ENCODE measurements at regions of chr1 and their contacts with region 1.

Region 1: DNA sequence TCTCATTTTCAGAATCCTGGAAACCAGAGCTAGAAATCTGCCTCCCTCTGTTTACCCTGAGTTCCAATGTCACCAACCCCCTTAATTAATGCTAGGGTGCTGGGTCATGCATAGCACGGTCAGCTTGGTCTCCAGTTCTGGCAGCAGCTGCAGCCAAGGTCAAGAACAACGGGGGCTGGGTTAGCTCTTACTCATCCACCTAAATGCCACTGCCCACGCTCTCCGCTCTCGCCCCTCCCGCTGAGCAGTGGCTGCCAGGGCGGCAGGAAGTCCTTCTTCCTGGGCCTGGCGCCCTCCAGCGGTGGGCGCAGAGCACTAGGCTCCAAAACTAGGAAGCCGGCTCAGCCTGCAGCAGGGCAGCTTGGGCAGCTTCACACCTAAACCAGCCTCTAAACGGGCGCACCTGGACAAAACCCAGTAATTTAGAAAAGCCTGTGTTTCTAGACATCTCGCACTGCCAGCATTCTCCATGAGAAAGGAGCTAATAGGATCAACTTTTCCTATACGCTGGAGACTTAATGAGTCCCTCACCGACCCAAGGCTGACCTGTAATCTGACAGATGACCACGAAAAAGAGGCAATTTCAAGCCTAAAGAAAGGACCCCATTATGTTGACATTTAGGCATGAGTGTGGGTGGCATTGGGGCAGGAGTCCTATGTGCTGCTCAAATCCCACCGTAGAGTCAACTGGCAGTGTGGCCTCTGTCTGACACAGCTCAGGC is 78.3 kb upstream of the LRRN2 start:
- DNase-seq: peak; percentile 79 to 89 (median 87)
- ATAC-seq: peak; percentile 99
- H3K4me3 ChIP-seq: no peak overlapping the region
- H3K27ac ChIP-seq: no peak overlapping the region
- H3K4me1 ChIP-seq: peaks cover 5 to 6% of the 10 kb centered on the region in 2 experiments; a peak in 4 of 5 replicates
- H3K27me3 ChIP-seq: peaks cover 8 to 14% of the 10 kb centered on the region in 2 experiments; a peak in 4 of 5 replicates
- CTCF ChIP-seq: peak; percentile 93 to 97 (median 95)
- EP300 ChIP-seq: peak; percentile 45; the same call in 1 of the 2 replicates
- POLR2A ChIP-seq: no peak
- RAD21 ChIP-seq: peak; percentile 91

Region 2: GRCh38 chr1:204390751-204391466 is 373.0 kb before region 1 on chr1:
- CTCF ChIA-PET with region 1: no interaction called
- POLR2A ChIA-PET with region 1: no interaction called
- in situ Hi-C with region 1: no loop called
- intact Hi-C with region 1: no loop called
- DNase-seq: no peak
- ATAC-seq: no peak
- H3K4me3 ChIP-seq: no peak overlapping the region
- H3K27ac ChIP-seq: no peak overlapping the region
- H3K4me1 ChIP-seq: no peaks in the 10 kb centered on the region
- H3K27me3 ChIP-seq: peaks cover 25 to 27% of the 10 kb centered on the region in 2 experiments
- CTCF ChIP-seq: no peak
- EP300 ChIP-seq: no peak
- POLR2A ChIP-seq: no peak
- RAD21 ChIP-seq: no peak

Region 3: GRCh38 chr1:204623894-204624361 is 139.9 kb before region 1 on chr1:
- CTCF ChIA-PET with region 1: interaction called, 5 read pairs
- POLR2A ChIA-PET with region 1: no interaction called
- in situ Hi-C with region 1: no loop called
- intact Hi-C with region 1: loop called (anchors 5 kb)
- DNase-seq: peak; percentile 71 to 88 (median 76)
- ATAC-seq: peak; percentile 89
- H3K4me3 ChIP-seq: no peak overlapping the region
- H3K27ac ChIP-seq: no peak overlapping the region
- H3K4me1 ChIP-seq: peaks cover 37 to 40% of the 10 kb centered on the region in 2 experiments
- H3K27me3 ChIP-seq: peaks cover 10 to 25% of the 10 kb centered on the region in 2 experiments
- CTCF ChIP-seq: peak; percentile 85 to 99 (median 87)
- EP300 ChIP-seq: no peak
- POLR2A ChIP-seq: no peak
- RAD21 ChIP-seq: peak in 1 of 2 experiments; percentile 45; a peak in 2 of 4 replicates

Region 4: GRCh38 chr1:204651843-204652421 is 111.9 kb before region 1 on chr1:
- CTCF ChIA-PET with region 1: no interaction called
- POLR2A ChIA-PET with region 1: no interaction called
- in situ Hi-C with region 1: no loop called
- intact Hi-C with region 1: no loop called
- DNase-seq: no peak
- ATAC-seq: no peak
- H3K4me3 ChIP-seq: no peak overlapping the region
- H3K27ac ChIP-seq: no peak overlapping the region
- H3K4me1 ChIP-seq: peaks cover 3 to 5% of the 10 kb centered on the region in 2 experiments; a peak in 3 of 5 replicates
- H3K27me3 ChIP-seq: peaks cover 13 to 46% of the 10 kb centered on the region in 2 experiments; a peak in 4 of 5 replicates
- CTCF ChIP-seq: no peak
- EP300 ChIP-seq: no peak
- POLR2A ChIP-seq: no peak
- RAD21 ChIP-seq: no peak

Region 5: DNA sequence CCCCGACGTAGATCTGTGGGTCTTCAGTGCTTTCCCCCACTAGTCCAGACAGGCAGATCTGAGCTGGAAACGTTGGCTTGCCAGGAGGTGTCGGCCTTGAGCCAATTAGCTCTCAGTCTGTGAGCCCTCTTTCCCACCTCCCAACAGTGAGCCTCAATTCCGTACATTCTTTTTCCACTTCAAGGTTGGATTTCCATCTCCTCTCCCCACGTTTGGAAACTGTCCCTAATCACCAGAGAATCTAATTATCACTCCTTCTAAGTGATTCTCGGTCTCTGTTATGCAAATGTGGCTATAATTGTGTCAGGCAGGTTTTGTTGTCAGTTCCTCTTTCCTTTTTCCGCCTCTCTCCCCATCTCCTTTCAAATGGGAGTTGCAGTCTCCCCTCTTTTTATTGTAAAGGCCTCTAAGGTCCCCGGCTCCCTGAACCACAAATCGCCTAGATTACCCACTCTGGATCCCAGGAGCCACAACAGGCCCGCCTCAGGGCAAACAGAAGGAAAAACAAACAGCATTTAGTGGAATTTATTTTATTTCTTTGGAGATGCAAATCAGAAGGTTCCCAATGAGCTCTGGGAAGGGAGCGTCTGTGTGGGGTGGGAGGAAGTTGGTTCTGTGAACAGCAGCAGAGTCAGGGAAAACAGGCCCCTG is 48.9 kb before region 1 on chr1:
- CTCF ChIA-PET with region 1: no interaction called
- POLR2A ChIA-PET with region 1: interaction called, 3 read pairs
- in situ Hi-C with region 1: no loop called
- intact Hi-C with region 1: loop called (anchors 5 kb)
- DNase-seq: peak in 1 of 4 experiments; percentile 38
- ATAC-seq: peak; percentile 39; the same call in 2 of the 3 replicates
- H3K4me3 ChIP-seq: no peak overlapping the region
- H3K27ac ChIP-seq: peak overlapping the region; percentile 2; the same call in 1 of the 3 replicates
- H3K4me1 ChIP-seq: peaks cover 16 to 45% of the 10 kb centered on the region in 2 experiments
- H3K27me3 ChIP-seq: no peaks in the 10 kb centered on the region
- CTCF ChIP-seq: peak; percentile 29 to 53 (median 51); a peak in 4 of 6 replicates
- EP300 ChIP-seq: no peak
- POLR2A ChIP-seq: no peak
- RAD21 ChIP-seq: peak; percentile 25 to 51; a peak in 2 of 4 replicates

Region 6: GRCh38 chr1:204751894-204752687 is 11.8 kb before region 1 on chr1:
- CTCF ChIA-PET with region 1: interaction called, 7 read pairs
- POLR2A ChIA-PET with region 1: interaction called, 11 read pairs
- in situ Hi-C with region 1: no loop called
- intact Hi-C with region 1: no loop called
- DNase-seq: peak; percentile 52 to 76 (median 70)
- ATAC-seq: peak; percentile 99
- H3K4me3 ChIP-seq: no peak overlapping the region
- H3K27ac ChIP-seq: no peak overlapping the region
- H3K4me1 ChIP-seq: peaks cover 6 to 9% of the 10 kb centered on the region in 2 experiments; a peak in 4 of 5 replicates
- H3K27me3 ChIP-seq: peaks cover 0 to 6% of the 10 kb centered on the region in 2 experiments; a peak in 1 of 5 replicates
- CTCF ChIP-seq: peak; percentile 62 to 71 (median 66)
- EP300 ChIP-seq: no peak
- POLR2A ChIP-seq: no peak
- RAD21 ChIP-seq: peak; percentile 29 to 37

Measured in K562 (cell line).